A673 (cell line): ENCODE measurements at regions of chr13 and their contacts with region 1.

Region 1: DNA sequence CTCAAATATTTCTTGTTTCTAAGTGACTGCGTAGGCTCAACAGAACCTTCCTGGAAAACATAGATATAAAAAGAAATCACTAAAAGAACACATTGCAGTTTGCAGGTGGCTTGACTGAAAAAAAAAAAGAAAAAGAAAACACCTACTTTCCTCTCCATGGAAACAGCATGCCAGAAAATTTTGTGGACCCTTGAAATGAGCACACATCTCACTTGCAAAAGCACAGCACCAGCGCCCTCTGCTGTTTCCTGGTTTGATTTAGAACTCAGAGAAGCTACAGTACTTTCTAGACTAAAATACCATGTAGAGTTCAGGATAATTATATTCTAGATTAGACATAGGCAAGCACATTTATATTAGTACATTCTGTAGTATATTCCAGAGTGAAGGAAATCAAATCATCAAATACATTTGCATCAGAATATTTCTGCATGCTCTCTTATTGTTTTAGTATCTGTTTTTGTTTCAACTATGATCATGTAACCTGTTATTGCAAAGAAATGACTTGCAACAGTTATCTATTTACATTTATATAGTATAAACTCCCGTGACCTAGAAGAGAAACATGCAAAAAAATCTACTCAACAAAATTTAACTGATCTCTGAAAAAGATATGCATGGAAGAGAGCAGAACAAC is 22.3 kb upstream of the XPO4 start:
- DNase-seq: peak; percentile 88
- H3K4me3 ChIP-seq: no peak overlapping the region
- H3K27ac ChIP-seq: no peak overlapping the region
- H3K4me1 ChIP-seq: no peaks in the 10 kb centered on the region
- H3K27me3 ChIP-seq: no peaks in the 10 kb centered on the region
- CTCF ChIP-seq: peak; percentile 85

Region 2: GRCh38 chr13:20182231-20182846 is 742.5 kb before region 1 on chr13:
- CTCF ChIA-PET with region 1: no interaction called
- POLR2A ChIA-PET with region 1: no interaction called
- intact Hi-C with region 1: loop called (anchors 10 kb)
- DNase-seq: peak; percentile 85
- H3K4me3 ChIP-seq: no peak overlapping the region
- H3K27ac ChIP-seq: no peak overlapping the region
- H3K4me1 ChIP-seq: peaks cover 10% of the 10 kb centered on the region
- H3K27me3 ChIP-seq: no peaks in the 10 kb centered on the region
- CTCF ChIP-seq: peak; percentile 84

Region 3: DNA sequence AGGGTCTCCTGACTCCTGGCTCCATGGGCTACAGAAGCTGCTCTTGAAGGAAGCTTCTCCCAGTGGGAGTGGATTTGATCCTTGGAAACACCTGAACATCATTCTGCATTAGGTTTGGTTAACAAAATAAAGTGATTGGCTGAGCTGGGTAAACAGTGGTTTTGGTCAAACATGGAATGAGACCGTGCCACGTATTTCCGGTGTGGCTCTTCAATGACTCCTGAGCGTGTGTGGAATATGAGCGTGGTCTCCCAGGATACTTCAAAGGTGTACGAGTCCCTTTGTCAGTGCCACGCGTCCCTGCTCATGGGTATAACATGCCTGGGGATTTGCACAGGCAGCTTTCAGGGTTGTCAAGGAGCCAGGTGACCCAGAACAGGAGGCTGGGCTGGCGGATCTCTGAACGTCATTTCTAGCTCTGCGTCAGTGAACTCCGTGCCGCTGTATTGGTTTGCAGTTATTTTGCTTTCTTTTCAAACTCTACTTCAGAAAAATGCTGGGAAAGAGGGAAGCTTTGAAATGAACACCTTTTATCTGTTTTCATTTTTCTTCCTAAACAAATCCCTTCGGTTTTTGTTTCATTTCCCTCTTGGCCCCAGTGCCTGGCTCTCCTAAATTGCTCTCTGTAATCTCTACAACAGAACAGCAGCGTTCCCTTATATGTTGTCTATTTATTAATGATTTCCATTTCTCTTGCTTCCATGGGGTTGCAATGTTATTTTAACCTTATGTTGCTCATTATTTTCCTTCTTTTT is 666.5 kb before region 1 on chr13:
- CTCF ChIA-PET with region 1: no interaction called
- POLR2A ChIA-PET with region 1: no interaction called
- intact Hi-C with region 1: no loop called
- DNase-seq: no peak
- H3K4me3 ChIP-seq: peak overlapping the region; percentile 27
- H3K27ac ChIP-seq: no peak overlapping the region
- H3K4me1 ChIP-seq: no peaks in the 10 kb centered on the region
- H3K27me3 ChIP-seq: no peaks in the 10 kb centered on the region
- CTCF ChIP-seq: no peak

Region 4: DNA sequence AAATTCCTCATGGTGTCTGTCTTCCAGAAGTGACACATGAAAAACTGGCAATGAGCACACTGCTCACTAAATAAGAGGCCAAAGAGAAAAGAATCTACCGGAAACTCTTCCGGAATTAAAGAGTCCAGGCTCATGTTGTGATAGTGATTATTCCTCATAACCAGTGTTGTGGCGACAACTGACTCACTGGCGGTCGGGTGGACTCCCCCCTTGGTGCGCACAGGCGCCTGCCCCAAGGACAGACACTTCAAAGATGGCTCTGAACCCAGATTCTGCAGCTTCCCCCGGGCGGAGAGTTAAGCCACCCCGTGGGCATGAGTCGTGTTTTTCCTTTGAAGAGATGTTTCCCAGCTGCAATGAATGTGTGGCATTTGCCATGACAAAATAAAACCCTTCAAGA is 211.1 kb before region 1 on chr13:
- CTCF ChIA-PET with region 1: no interaction called
- POLR2A ChIA-PET with region 1: no interaction called
- intact Hi-C with region 1: loop called (anchors 2 kb)
- DNase-seq: peak; percentile 44
- H3K4me3 ChIP-seq: no peak overlapping the region
- H3K27ac ChIP-seq: no peak overlapping the region
- H3K4me1 ChIP-seq: peaks cover 15% of the 10 kb centered on the region
- H3K27me3 ChIP-seq: no peaks in the 10 kb centered on the region
- CTCF ChIP-seq: no peak

Region 5: DNA sequence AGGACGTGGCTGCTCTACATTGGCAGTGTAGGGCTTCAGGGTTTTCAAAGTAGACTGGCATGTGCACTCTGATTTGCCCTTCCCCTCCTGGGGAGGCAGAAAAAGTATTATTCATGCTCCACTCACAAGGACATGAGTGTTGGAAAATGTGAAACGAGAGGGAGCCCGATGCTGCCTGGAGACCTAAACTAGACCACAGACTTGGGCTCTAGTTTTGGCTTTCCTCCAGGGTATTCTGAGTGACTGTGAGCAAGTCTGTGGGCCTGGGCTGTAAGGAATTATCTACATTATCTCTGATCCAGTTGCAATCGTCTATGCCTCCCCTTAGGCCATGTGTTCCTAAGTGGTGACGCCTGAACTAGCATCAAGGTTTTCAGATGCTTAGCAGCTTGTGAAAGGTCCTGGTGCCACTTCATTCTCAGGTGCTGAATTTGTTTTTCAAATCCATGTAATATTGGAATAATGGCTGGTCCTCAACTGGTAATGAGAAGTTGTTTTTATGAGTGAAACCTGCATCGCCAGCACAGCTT is 306.6 kb after region 1 on chr13:
- CTCF ChIA-PET with region 1: no interaction called
- POLR2A ChIA-PET with region 1: no interaction called
- intact Hi-C with region 1: no loop called
- DNase-seq: peak; percentile 49
- H3K4me3 ChIP-seq: no peak overlapping the region
- H3K27ac ChIP-seq: peak overlapping the region; percentile 70
- H3K4me1 ChIP-seq: peaks cover 43% of the 10 kb centered on the region
- H3K27me3 ChIP-seq: no peaks in the 10 kb centered on the region
- CTCF ChIP-seq: no peak

Region 6: GRCh38 chr13:22690756-22691155 is 1765.9 kb after region 1 on chr13:
- CTCF ChIA-PET with region 1: no interaction called
- POLR2A ChIA-PET with region 1: no interaction called
- intact Hi-C with region 1: no loop called
- DNase-seq: no peak
- H3K4me3 ChIP-seq: no peak overlapping the region
- H3K27ac ChIP-seq: no peak overlapping the region
- H3K4me1 ChIP-seq: no peaks in the 10 kb centered on the region
- H3K27me3 ChIP-seq: no peaks in the 10 kb centered on the region
- CTCF ChIP-seq: no peak